ENCODE measurements at regions of chr17 and their contacts with region 1.

Region 1: GRCh38 chr17:45235416-45236281 is 14.0 kb downstream of the FMNL1 start:
- DNase-seq: peak; percentile 73
- ATAC-seq: peak; percentile 37
- H3K4me3 Mint-ChIP-seq: no peak overlapping the region
- H3K27ac Mint-ChIP-seq: peak overlapping the region; percentile 74
- H3K4me1 Mint-ChIP-seq: peaks cover 43% of the 10 kb centered on the region
- H3K27me3 Mint-ChIP-seq: no peaks in the 10 kb centered on the region

Region 2: GRCh38 chr17:45218895-45219661 is 16.6 kb before region 1 on chr17:
- POLR2A ChIA-PET with region 1: interaction called, 187 read pairs
- DNase-seq: peak; percentile 88
- ATAC-seq: no peak
- H3K4me3 Mint-ChIP-seq: peak overlapping the region; percentile 95
- H3K27ac Mint-ChIP-seq: peak overlapping the region; percentile 62
- H3K4me1 Mint-ChIP-seq: peaks cover 33% of the 10 kb centered on the region
- H3K27me3 Mint-ChIP-seq: no peaks in the 10 kb centered on the region